Activated naive CD4-positive, alpha-beta T cell treated with anti-CD3 and anti-CD28 coated beads for 36 hours (primary cell): ENCODE measurements at regions of chr6 and their contacts with region 1.

Region 1: DNA sequence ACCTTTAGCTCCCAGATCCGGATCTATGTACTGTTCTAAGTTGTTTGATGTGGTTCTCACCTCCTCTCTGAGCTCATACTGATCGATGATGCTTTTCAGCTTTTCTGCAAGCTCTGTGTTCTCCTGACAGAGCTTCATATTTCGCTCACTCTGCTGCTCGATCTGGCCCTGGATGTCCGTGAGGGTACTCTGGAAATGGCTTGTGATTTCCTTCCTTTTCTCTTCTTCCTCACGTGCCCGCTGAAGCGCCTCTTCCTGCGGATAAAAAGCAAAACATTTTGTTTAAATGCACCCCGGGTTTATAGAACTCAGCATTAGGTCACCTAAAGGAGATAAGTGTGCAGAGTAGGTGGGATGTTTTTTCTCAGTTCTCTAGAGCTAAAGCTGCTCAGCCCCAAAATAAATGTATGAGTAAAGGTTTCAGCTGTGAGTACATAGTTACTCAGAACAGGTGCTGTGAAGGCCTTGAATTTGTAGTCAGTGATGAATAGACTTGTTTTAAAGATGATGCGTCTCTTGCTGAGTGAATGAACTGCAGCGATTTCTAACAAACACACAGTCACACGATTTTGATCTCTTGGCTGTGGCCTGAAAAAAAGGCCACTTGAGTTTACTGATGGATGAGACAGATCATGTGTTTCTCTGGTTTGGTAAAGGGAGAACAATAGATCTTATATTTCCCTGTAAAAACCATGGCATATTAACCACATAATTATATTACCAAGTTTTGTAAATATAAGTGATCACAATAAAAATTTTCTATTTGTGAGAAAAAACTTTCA is 29.1 kb downstream of the TXLNB start:
- DNase-seq: peak; percentile 51
- H3K4me3 Mint-ChIP-seq: peak overlapping the region; percentile 65
- H3K27ac Mint-ChIP-seq: peak overlapping the region; percentile 88
- H3K4me1 Mint-ChIP-seq: peaks cover 23% of the 10 kb centered on the region
- H3K27me3 Mint-ChIP-seq: no peaks in the 10 kb centered on the region

Region 2: GRCh38 chr6:139161817-139162284 is 100.9 kb before region 1 on chr6:
- CTCF ChIA-PET with region 1: interaction called, 3 read pairs
- intact Hi-C with region 1: loop called (anchors 1 kb)
- DNase-seq: peak; percentile 88
- H3K4me3 Mint-ChIP-seq: peak overlapping the region; percentile 39
- H3K27ac Mint-ChIP-seq: peak overlapping the region; percentile 92
- H3K4me1 Mint-ChIP-seq: peaks cover 91% of the 10 kb centered on the region
- H3K27me3 Mint-ChIP-seq: no peaks in the 10 kb centered on the region

Region 3: GRCh38 chr6:139250296-139251044 is 12.2 kb before region 1 on chr6:
- CTCF ChIA-PET with region 1: interaction called, 4 read pairs
- intact Hi-C with region 1: loop called (anchors 1 kb)
- DNase-seq: peak; percentile 66
- H3K4me3 Mint-ChIP-seq: no peak overlapping the region
- H3K27ac Mint-ChIP-seq: peak overlapping the region; percentile 20
- H3K4me1 Mint-ChIP-seq: peaks cover 40% of the 10 kb centered on the region
- H3K27me3 Mint-ChIP-seq: no peaks in the 10 kb centered on the region

Region 4: GRCh38 chr6:139278190-139278589 is 15.5 kb after region 1 on chr6:
- CTCF ChIA-PET with region 1: interaction called, 3 read pairs
- intact Hi-C with region 1: loop called (anchors 1 kb)
- DNase-seq: no peak
- H3K4me3 Mint-ChIP-seq: no peak overlapping the region
- H3K27ac Mint-ChIP-seq: no peak overlapping the region
- H3K4me1 Mint-ChIP-seq: peaks cover 27% of the 10 kb centered on the region
- H3K27me3 Mint-ChIP-seq: no peaks in the 10 kb centered on the region

Region 5: GRCh38 chr6:139308286-139308916 is 45.7 kb after region 1 on chr6:
- CTCF ChIA-PET with region 1: interaction called, 6 read pairs
- intact Hi-C with region 1: loop called (anchors 1 kb)
- DNase-seq: no peak
- H3K4me3 Mint-ChIP-seq: no peak overlapping the region
- H3K27ac Mint-ChIP-seq: peak overlapping the region; percentile 82
- H3K4me1 Mint-ChIP-seq: peaks cover 25% of the 10 kb centered on the region
- H3K27me3 Mint-ChIP-seq: no peaks in the 10 kb centered on the region

Region 6: GRCh38 chr6:139323511-139324300 is 61.0 kb after region 1 on chr6:
- CTCF ChIA-PET with region 1: interaction called, 5 read pairs
- intact Hi-C with region 1: loop called (anchors 1 kb)
- DNase-seq: peak; percentile 88
- H3K4me3 Mint-ChIP-seq: peak overlapping the region; percentile 77
- H3K27ac Mint-ChIP-seq: peak overlapping the region; percentile 97
- H3K4me1 Mint-ChIP-seq: peaks cover 31% of the 10 kb centered on the region
- H3K27me3 Mint-ChIP-seq: no peaks in the 10 kb centered on the region